ENCODE measurements at regions of chr19 and their contacts with region 1.

Region 1: GRCh38 chr19:11924886-11925650 is at the start of gene ZNF700:
- DNase-seq: peak; percentile 78 to 96 (median 90)
- ATAC-seq: peak; percentile 85 to 88
- H3K4me3 Mint-ChIP-seq: peak within 1 kb of the TSS; percentile 90 to 100 (median 98)
- H3K27ac Mint-ChIP-seq: peak within 1 kb of the TSS; percentile 93 to 99 (median 98)
- H3K4me1 Mint-ChIP-seq: peaks cover 28 to 50% (median 44%) of the 10 kb centered on the region in 4 donors
- H3K27me3 Mint-ChIP-seq: no peaks in the 10 kb centered on the region
- polyA plus RNA-seq, gene ZNF700: 1.1 to 2.9 (median 1.2) TPM

Region 2: DNA sequence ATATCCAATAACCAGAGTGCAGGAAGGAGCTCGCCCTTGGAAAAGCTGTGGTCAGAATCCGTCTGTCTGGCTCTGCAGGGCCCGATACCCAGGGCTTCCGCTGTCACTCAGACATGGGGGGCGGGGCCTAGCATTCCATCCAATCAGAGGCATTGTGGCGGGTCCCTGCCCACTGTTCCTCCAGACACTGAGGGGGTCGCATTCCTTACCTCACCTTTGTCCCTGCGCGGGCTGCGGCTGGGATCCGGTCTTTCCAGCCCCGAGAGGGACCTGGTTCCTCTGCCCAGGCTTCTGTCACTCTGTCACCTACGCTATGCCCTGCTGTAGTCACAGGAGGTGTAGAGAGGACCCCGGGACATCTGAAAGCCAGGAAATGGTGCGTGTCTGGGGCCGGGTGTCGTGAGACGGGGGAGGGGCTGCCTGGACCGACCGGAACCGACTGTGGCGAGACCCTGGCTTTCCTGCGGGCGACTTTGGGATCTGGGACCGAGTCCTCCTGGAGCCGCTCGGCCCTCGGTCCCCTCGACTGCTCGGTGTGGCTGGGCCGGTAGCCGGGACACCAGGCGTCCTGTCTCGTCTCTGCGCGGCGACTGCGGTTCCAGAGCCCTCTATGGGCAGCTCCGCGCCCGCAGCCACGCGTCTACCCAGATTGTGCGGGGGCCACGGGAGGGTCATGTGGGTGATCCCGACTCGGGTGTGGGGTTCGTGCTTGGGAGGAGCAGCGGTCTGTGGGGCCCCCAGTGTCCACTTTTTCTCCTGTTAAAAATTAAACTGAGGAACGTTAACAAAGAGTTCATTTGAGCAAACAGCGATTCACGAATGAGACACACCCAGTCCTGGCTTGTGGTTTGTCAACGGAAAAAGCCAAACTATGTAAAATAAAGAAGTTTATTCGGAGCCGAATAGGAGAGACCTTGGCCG is 37.2 kb before region 1 on chr19 and contains the start of gene ZNF69:
- POLR2A ChIA-PET with region 1: interaction called, 10 read pairs
- DNase-seq: peak; percentile 50 to 82 (median 64)
- ATAC-seq: peak; percentile 91
- H3K4me3 Mint-ChIP-seq: peak within 1 kb of the TSS; percentile 91 to 98 (median 94)
- H3K27ac Mint-ChIP-seq: peak within 1 kb of the TSS; percentile 87 to 96 (median 94)
- H3K4me1 Mint-ChIP-seq: peaks cover 23 to 42% (median 36%) of the 10 kb centered on the region in 4 donors
- H3K27me3 Mint-ChIP-seq: no peaks in the 10 kb centered on the region
- polyA plus RNA-seq, gene ZNF69: 4.6 to 10.5 (median 5.0) TPM

Region 3: DNA sequence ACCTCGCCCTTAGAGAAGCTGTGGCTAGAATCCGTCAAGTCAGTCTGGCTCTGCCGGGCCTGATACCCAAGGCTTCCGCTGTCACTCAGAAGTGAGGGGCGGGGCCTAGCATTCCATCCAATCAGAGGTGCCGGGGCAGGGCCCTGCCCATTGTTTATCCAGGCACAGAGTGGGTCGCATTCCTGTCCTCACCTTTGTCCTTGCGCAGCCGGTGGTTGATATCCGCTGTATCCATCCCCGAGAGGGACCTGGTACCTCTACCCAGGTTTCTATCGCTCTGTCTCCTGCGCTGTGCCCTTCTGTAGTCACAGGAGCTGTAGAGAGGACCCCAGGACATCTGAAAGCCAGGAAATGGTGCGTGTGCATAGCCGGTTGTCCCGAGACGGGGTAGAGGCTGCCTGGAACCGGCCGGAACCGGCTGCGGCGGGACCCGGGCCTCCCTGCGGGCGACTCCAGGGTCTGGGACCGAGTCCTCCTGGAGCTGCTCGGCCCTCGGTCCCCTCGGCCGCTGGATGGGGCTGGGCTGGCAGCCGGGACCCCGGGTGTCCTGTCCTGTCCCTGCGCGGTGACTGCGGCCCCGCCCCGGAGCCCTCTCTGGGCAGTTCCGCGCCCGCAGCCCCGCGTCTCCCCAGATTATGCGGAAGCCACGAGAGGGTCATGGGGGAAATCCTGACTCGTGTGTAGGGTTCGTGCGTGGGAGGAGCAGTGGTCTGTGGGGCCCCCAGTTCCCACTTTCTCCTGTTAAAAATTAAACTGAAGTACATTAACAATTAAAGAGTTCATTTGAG is 40.0 kb after region 1 on chr19 and contains the start of gene ZNF763:
- POLR2A ChIA-PET with region 1: interaction called, 38 read pairs
- DNase-seq: peak; percentile 72 to 95 (median 86)
- ATAC-seq: peak; percentile 91
- H3K4me3 Mint-ChIP-seq: peak within 1 kb of the TSS; percentile 90 to 99 (median 96)
- H3K27ac Mint-ChIP-seq: peak within 1 kb of the TSS; percentile 78 to 99 (median 96)
- H3K4me1 Mint-ChIP-seq: peaks cover 16 to 31% (median 29%) of the 10 kb centered on the region in 4 donors
- H3K27me3 Mint-ChIP-seq: no peaks in the 10 kb centered on the region
- polyA plus RNA-seq, gene ZNF763: 1.9 to 3.9 (median 2.6) TPM

Region 4: DNA sequence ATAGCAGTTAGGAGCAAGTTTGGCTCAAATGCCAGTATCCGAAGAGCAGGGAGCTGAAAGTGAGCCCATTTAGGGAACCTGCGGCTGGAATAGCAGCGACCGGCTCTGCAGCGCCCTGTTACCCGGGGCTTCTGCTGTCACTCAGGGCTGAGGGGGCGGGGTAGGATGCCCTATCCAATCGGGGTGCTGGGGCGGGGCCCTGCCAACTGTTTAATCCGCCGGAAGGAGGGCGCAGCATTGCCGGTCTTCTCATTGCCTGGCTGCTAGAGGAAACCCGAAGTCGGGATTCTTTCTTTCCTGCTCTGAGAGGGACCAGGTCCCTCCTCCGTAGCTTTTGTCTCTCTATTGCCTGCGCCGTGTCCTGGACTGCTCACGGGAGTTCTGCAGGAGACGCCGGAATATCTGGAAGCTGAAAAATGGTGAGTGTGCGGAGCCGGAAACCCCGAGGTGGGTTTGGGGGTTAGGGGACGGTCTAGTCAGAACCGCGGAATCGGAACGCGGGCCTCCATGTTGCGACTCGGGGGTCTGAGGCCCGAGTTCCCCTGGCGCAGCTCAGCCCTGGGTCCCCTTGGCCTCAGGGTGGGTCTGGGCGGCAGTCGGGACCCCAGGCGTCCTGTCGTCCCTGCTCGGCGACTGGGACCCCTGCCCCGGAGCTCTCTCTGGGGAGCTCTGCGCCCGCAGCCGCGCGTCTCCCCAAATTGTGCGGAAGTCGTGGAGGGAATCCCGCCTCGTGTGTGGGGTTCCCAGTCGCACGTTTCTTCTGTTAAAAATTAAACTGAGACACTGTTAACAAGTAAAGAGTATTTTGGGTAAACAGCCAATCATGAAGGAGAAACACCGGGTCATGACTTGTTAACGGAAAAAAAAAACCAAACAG is 62.6 kb after region 1 on chr19:
- POLR2A ChIA-PET with region 1: interaction called, 102 read pairs
- DNase-seq: peak; percentile 82 to 96 (median 89)
- ATAC-seq: peak; percentile 91 to 92
- H3K4me3 Mint-ChIP-seq: peak overlapping the region; percentile 89 to 100 (median 99)
- H3K27ac Mint-ChIP-seq: peak overlapping the region; percentile 83 to 99 (median 97)
- H3K4me1 Mint-ChIP-seq: peaks cover 16 to 35% (median 31%) of the 10 kb centered on the region in 4 donors
- H3K27me3 Mint-ChIP-seq: no peaks in the 10 kb centered on the region

Region 5: DNA sequence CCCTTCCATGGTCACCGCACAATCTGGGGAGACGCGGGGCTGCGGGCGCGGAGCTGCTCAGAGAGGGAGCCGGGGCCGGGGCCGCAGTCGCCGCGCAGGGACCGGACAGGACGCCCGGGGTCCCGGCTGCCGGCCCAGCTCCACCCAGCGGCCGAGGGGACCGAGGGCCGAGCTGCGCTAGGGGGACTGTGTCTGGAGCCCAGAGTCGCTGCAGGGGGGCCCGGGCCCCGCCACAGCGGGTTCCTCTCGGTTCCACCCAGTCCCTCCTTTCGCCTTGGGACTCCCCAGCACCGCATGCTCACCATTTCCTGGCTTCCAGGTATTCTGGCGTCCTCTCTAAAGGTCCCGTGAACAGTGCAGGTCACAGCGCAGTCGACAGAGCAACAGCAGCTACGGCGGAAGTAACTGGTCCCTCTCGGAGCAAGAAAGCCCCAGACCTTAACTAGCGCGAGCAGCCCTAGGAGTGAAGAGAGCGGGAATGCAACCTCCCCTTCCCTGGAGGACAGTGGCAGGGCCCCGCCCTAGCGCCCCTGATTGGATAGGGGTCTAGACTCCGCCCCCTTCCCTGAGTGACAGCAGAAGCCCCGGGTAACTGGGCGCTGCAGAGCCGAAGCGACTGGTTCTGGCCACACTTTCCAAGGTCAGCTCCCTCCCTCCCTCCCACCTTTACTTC is 127.6 kb after region 1 on chr19 and contains the start of gene ZNF878:
- POLR2A ChIA-PET with region 1: no interaction called
- DNase-seq: peak in 9 of 10 donors; percentile 8 to 70 (median 32)
- ATAC-seq: peak; percentile 76 to 85
- H3K4me3 Mint-ChIP-seq: peak within 1 kb of the TSS; percentile 79 to 94 (median 91)
- H3K27ac Mint-ChIP-seq: peak within 1 kb of the TSS in 8 of 10 donors; percentile 22 to 73 (median 68)
- H3K4me1 Mint-ChIP-seq: peaks cover 13 to 17% (median 15%) of the 10 kb centered on the region in 4 donors
- H3K27me3 Mint-ChIP-seq: peaks cover 6 to 26% (median 10%) of the 10 kb centered on the region in 5 donors
- polyA plus RNA-seq, gene ZNF878: not detected